Activated CD8-positive, alpha-beta memory T cell treated with anti-CD3 and anti-CD28 coated beads, Interleukin-2, amount 10 ng/mL, durations not matched to agents 7 days and 5 days (primary cell): ENCODE measurements at regions of chr22 and their contacts with region 1.

Region 1: DNA sequence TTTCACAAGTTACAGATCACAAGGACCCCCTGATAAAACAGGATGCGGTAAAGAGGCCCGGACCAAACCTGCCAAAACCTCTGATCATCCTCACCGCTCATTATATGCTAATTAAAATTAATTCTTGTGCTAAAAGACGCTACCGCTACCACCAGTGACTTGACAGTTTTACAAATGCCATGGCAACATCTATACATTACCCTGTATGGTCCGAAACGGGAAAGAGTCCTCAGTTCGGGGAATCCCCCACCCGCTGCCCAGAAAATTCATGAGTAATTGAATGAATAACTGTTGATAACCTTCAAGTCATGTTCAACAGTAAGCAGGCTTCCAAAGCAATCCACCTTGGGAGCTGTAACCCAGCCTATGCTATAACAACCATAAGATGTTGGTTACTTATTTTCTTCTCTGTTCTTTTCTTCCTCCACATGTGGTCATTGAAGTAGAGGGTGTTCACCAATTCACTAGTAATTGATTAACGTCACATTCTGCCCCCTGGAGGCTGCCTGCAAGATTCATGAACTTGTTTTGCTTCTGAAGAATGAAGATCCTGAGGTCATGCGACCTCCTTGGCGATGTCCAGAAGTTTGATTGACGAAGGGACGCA is 20.6 kb downstream of the APOBEC3H start:
- DNase-seq: peak; percentile 90
- ATAC-seq: peak; percentile 81
- H3K4me3 Mint-ChIP-seq: peak overlapping the region; percentile 59
- H3K27ac Mint-ChIP-seq: peak overlapping the region; percentile 91
- H3K4me1 Mint-ChIP-seq: peaks cover 60% of the 10 kb centered on the region
- H3K27me3 Mint-ChIP-seq: no peaks in the 10 kb centered on the region

Region 2: GRCh38 chr22:39039306-39040126 is 78.2 kb before region 1 on chr22:
- CTCF ChIA-PET with region 1: no interaction called
- DNase-seq: no peak
- ATAC-seq: no peak
- H3K4me3 Mint-ChIP-seq: peak overlapping the region; percentile 71
- H3K27ac Mint-ChIP-seq: peak overlapping the region; percentile 78
- H3K4me1 Mint-ChIP-seq: peaks cover 30% of the 10 kb centered on the region
- H3K27me3 Mint-ChIP-seq: no peaks in the 10 kb centered on the region

Region 3: DNA sequence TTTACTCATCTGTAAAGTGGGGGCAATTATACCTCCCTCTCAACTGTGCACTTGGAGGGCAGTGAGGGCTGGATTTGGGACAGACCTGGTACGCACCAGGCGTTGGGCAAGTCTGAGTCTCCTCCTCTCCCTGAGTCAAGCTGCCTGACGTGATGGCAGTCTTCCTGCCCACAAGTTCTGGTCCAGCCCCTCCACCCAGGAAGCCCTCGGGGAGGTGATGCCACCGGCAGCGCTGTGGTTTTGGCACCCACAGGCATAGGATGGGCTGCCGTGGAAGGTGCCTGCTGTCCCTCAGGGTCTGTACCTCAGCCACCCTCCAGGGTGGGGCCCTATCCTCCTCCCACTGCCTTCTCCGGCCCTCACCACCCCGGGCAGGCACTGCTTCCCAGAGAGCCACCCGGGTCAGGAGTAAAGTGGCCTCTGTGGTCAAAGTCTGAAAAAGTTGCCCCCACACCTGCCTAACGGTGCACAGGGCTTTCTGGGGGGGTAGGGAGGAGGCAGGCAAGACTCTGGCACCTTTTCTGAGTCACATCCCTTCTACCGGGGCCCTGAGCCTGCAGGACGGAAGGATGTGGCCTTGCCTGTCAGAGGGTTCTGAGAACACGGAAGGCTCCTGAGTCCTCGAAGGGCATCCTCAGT is 27.1 kb before region 1 on chr22:
- CTCF ChIA-PET with region 1: interaction called, 17 read pairs
- DNase-seq: peak; percentile 97
- ATAC-seq: peak; percentile 83
- H3K4me3 Mint-ChIP-seq: peak overlapping the region; percentile 66
- H3K27ac Mint-ChIP-seq: peak overlapping the region; percentile 99
- H3K4me1 Mint-ChIP-seq: peaks cover 98% of the 10 kb centered on the region
- H3K27me3 Mint-ChIP-seq: no peaks in the 10 kb centered on the region

Region 4: DNA sequence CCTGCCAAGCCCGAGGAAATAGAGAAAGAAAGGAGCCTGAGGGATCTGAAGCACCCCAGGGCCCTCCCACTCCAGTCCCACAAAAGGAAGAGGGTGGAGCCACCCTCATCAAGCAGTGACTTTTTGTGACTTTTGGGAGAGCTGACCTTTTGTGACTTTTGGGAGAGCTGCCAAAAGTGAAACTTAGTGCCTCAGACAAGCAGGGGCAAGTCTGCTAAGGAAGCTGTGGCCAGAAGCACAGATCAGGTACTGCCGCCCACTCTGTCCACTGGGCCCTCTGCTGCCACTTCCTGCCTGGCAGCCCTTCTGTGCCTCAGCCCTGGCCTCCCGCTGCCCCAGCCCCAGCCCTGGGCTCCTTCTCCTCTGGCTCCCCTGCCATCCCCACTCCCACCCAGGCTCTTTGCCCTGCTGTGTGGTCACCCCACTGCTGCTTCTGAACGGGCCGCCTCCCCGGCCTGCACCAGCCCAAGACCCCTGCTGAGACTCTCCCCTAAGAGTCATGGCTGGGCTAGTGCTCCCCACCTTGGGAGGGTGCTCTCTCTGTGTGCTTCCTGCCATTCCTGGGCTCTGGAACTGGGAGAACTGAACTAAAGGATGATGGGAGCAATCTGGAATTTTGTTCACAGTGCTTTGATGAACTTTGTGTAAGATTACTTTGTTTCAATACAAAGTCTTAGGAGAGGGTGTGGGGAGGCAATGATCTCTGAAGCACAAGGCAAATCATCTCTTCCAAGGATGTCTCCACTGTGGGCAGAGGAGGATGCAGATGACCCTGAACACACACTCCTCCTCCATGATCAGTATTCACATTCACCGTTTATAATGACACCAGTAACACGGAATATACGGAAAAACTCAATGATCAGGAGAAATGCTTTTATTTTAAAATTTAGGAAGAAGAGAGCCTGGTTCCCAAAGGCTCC is 20.3 kb before region 1 on chr22 and contains the start of gene APOBEC3H:
- CTCF ChIA-PET with region 1: interaction called, 17 read pairs
- DNase-seq: peak; percentile 79
- ATAC-seq: peak; percentile 69
- H3K4me3 Mint-ChIP-seq: peak within 1 kb of the TSS; percentile 97
- H3K27ac Mint-ChIP-seq: peak within 1 kb of the TSS; percentile 97
- H3K4me1 Mint-ChIP-seq: peaks cover 79% of the 10 kb centered on the region
- H3K27me3 Mint-ChIP-seq: no peaks in the 10 kb centered on the region
- total RNA-seq, gene APOBEC3H: 67.0 to 137 TPM

Region 5: DNA sequence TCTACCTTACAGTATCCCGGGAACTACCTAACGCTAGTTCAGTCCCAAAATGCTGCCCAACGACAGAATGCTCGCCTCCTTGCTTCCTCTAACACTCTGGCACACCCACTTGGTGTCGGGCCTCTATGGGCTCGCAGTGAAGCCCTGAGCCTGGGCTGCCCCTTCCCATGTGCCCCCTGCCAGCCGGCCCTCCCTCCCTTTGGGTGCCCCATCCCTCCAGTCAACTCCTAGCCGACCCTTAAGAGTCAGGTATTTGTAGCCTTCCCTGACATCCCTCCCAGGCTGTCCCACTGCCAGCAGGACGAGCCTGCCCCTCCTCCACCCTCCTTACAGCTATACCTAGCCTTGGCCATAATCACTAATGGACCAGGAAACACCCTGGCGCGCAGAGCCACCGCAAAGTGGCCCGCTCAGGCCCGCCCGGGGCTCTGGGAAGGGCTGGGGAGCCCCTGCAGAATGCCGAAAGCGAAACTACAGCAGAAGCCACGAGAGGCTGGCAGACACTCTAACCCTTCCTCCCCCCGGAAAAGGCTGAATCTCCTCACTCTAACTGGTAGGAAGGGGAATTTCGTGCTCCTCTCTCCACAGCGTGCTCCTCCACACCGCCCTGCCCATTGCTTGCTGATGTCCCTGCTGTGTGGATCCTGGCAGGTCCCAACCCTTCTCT is 26.5 kb after region 1 on chr22:
- CTCF ChIA-PET with region 1: no interaction called
- DNase-seq: peak; percentile 81
- ATAC-seq: peak; percentile 62
- H3K4me3 Mint-ChIP-seq: peak overlapping the region; percentile 99
- H3K27ac Mint-ChIP-seq: peak overlapping the region; percentile 97
- H3K4me1 Mint-ChIP-seq: peaks cover 29% of the 10 kb centered on the region
- H3K27me3 Mint-ChIP-seq: no peaks in the 10 kb centered on the region

Region 6: DNA sequence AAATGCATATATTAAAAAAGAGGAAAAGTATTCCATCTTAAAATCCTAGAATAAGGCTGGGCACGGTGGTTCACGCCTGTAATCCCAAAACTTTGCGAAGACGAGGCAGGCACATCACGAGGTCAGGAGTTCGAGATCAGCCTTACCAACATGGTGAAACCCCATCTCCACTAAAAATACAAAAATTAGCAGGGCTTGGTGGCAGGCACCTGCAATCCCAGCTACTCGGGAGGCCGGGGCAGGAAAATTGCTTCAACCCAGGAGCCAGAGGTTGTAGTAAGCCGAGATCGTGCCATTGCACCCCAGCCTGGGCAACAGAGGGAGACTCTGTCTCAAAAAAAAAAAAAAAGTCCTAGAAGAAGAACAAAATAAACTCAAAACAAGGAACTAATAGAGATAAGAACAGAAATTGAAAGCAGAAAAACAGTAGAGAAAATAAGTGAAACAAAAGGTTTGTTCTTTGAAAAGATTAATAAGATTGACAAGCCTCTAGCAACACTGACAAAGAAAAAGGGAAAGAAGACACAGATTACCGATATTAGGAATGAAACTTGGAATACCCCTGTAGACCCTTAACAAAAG is 79.8 kb after region 1 on chr22:
- CTCF ChIA-PET with region 1: no interaction called
- DNase-seq: no peak
- ATAC-seq: no peak
- H3K4me3 Mint-ChIP-seq: no peak overlapping the region
- H3K27ac Mint-ChIP-seq: no peak overlapping the region
- H3K4me1 Mint-ChIP-seq: no peaks in the 10 kb centered on the region
- H3K27me3 Mint-ChIP-seq: peaks cover 57% of the 10 kb centered on the region